ENCODE measurements at regions of chr5 and their contacts with region 1.

Region 1: GRCh38 chr5:10353241-10354047 is at the start of gene MARCHF6:
- DNase-seq: peak; percentile 98
- H3K4me3 ChIP-seq: peak within 1 kb of the TSS; percentile 82 to 98 (median 91)
- H3K27ac ChIP-seq: peak within 1 kb of the TSS; percentile 94 to 99 (median 96)
- H3K4me1 ChIP-seq: peaks cover 0 to 45% (median 43%) of the 10 kb centered on the region in 4 donors
- H3K27me3 ChIP-seq: no peaks in the 10 kb centered on the region
- CTCF ChIP-seq: no peak
- EP300 ChIP-seq: no peak
- POLR2A ChIP-seq: peak; percentile 90 to 95
- total RNA-seq, gene MARCHF6: 77.0 to 108 (median 92.1) TPM

Region 2: GRCh38 chr5:10307206-10308148 is 46.0 kb before region 1 on chr5 and contains the start of gene CMBL:
- intact Hi-C with region 1: loop called (anchors 5 kb)
- DNase-seq: peak; percentile 69
- H3K4me3 ChIP-seq: peak within 1 kb of the TSS; percentile 55 to 75 (median 64)
- H3K27ac ChIP-seq: peak within 1 kb of the TSS; percentile 79 to 85 (median 84)
- H3K4me1 ChIP-seq: peaks cover 0 to 14% (median 11%) of the 10 kb centered on the region in 4 donors
- H3K27me3 ChIP-seq: no peaks in the 10 kb centered on the region
- CTCF ChIP-seq: no peak
- EP300 ChIP-seq: no peak
- POLR2A ChIP-seq: no peak
- total RNA-seq, gene CMBL: 8.1 to 21.3 (median 11.4) TPM

Region 3: DNA sequence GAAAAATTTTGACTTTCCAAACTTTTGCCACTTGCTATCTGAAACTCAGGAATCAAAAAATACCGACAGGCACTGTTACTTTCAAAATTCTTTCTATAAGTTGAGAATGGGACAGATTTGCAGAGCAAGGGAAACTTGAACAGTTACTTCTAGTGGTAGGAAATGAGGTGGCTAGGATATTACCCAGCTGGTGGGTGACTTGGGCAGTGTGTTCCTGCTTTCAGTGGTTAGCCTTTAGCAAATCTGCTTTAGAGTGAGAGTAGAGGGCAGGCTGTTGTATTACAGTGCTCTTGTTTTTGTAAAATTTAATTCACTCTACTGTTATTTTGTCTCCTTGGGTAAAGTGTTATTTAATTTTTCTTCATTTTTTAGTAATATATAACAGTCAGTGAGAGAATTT is 48.1 kb after region 1 on chr5:
- intact Hi-C with region 1: no loop called
- DNase-seq: no peak
- H3K4me3 ChIP-seq: no peak overlapping the region
- H3K27ac ChIP-seq: peak overlapping the region in 2 of 4 donors; percentile 38 to 46
- H3K4me1 ChIP-seq: peaks cover 0 to 20% (median 14%) of the 10 kb centered on the region in 4 donors
- H3K27me3 ChIP-seq: no peaks in the 10 kb centered on the region
- CTCF ChIP-seq: no peak
- EP300 ChIP-seq: no peak
- POLR2A ChIP-seq: no peak